Breast epithelium (tissue), 4 donors: ENCODE measurements at regions of chr14 and their contacts with region 1.

Region 1: GRCh38 chr14:92241966-92242595 is 80.9 kb upstream of the SLC24A4 start:
- DNase-seq: no peak
- H3K4me3 ChIP-seq: no peak overlapping the region
- H3K27ac ChIP-seq: no peak overlapping the region
- H3K4me1 ChIP-seq: no peaks in the 10 kb centered on the region
- H3K27me3 ChIP-seq: no peaks in the 10 kb centered on the region
- CTCF ChIP-seq: no peak
- POLR2A ChIP-seq: no peak

Region 2: GRCh38 chr14:92175811-92176210 is 66.3 kb before region 1 on chr14:
- intact Hi-C with region 1: no loop called
- DNase-seq: no peak
- H3K4me3 ChIP-seq: no peak overlapping the region
- H3K27ac ChIP-seq: no peak overlapping the region
- H3K4me1 ChIP-seq: no peaks in the 10 kb centered on the region
- H3K27me3 ChIP-seq: no peaks in the 10 kb centered on the region
- CTCF ChIP-seq: no peak
- POLR2A ChIP-seq: no peak

Region 3: DNA sequence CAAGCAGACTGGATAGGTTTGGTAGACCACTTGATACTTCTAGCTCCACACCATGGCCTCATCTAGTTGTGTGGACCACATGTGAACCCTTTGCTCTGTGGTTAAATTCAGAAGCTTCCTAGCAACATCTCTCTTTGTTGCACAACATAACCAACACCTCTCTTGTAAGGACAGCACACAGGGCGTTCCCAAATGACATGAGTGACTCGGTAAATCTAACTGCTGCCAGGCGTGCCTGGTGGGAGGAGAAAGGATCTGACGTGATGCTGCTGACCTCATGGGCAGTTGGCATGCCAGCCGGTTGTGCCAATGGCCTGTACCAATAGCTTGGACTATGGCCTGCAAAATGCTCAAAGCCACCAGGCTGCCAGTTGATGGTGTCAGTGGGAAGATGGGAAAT is 26.5 kb before region 1 on chr14:
- intact Hi-C with region 1: no loop called
- DNase-seq: no peak
- H3K4me3 ChIP-seq: no peak overlapping the region
- H3K27ac ChIP-seq: no peak overlapping the region
- H3K4me1 ChIP-seq: no peaks in the 10 kb centered on the region
- H3K27me3 ChIP-seq: no peaks in the 10 kb centered on the region
- CTCF ChIP-seq: no peak
- POLR2A ChIP-seq: no peak

Region 4: GRCh38 chr14:92551044-92551841 is 309.2 kb after region 1 on chr14:
- intact Hi-C with region 1: loop called (anchors 5 kb)
- DNase-seq: no peak
- H3K4me3 ChIP-seq: no peak overlapping the region
- H3K27ac ChIP-seq: no peak overlapping the region
- H3K4me1 ChIP-seq: peaks cover 0 to 4% of the 10 kb centered on the region in 2 donors
- H3K27me3 ChIP-seq: no peaks in the 10 kb centered on the region
- CTCF ChIP-seq: peak in 1 of 3 donors; percentile 26
- POLR2A ChIP-seq: no peak